Naive thymus-derived CD4-positive, alpha-beta T cell (primary cell): ENCODE measurements at regions of chr3 and their contacts with region 1.

Region 1: GRCh38 chr3:141738022-141738890 is at the start of gene RNF7:
- DNase-seq: peak; percentile 95 to 98 (median 98)
- ATAC-seq: peak; percentile 96
- H3K4me3 ChIP-seq: peak within 1 kb of the TSS; percentile 94
- H3K4me3 Mint-ChIP-seq: peak within 1 kb of the TSS; percentile 92 to 100 (median 98)
- H3K27ac ChIP-seq: peak within 1 kb of the TSS; percentile 95
- H3K27ac Mint-ChIP-seq: peak within 1 kb of the TSS; percentile 92 to 99 (median 98)
- H3K4me1 ChIP-seq: peaks cover 20 to 25% of the 10 kb centered on the region in 2 donors
- H3K4me1 Mint-ChIP-seq: peaks cover 21 to 47% (median 44%) of the 10 kb centered on the region in 7 donors
- H3K27me3 ChIP-seq: no peaks in the 10 kb centered on the region
- H3K27me3 Mint-ChIP-seq: peaks cover 0 to 5% (median 0%) of the 10 kb centered on the region in 5 donors
- total RNA-seq, gene RNF7: 45.6 to 63.2 (median 57.3) TPM

Region 2: DNA sequence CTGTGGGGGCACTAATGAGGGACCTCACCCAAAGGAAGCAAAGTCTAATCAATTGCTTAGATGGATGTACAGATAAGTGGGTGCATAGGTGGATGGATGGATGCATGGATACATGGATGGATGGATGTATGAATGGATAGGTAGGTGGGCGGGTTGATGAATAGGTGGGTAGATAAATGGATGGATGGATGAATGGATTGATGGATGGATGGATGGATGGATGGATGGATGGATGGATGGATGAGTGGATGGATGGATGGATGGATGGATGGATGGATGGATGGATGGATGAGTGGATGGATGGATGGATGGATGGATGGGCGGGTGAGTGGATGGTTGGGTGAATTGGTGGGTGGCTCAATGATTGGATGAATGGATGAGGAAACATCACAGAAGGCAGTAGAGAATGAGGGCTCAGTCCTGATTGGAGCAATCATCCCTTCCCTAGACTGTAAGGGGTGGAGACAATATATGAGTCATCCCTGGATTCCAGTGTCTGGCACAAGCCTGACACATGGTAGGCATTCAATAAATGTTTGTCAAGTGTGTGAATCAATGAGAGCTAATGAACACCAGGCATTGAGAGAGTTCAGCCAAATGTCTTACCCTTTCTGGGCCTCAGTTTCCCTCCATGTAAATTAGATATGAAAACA is 547.0 kb before region 1 on chr3:
- CTCF ChIA-PET with region 1: no interaction called
- POLR2A ChIA-PET with region 1: no interaction called
- intact Hi-C with region 1: no loop called
- DNase-seq: no peak
- ATAC-seq: no peak
- H3K4me3 ChIP-seq: no peak overlapping the region
- H3K4me3 Mint-ChIP-seq: no peak overlapping the region
- H3K27ac ChIP-seq: no peak overlapping the region
- H3K27ac Mint-ChIP-seq: peak overlapping the region in 2 of 9 donors; percentile 4
- H3K4me1 ChIP-seq: no peaks in the 10 kb centered on the region
- H3K4me1 Mint-ChIP-seq: peaks cover 0 to 15% (median 13%) of the 10 kb centered on the region in 7 donors
- H3K27me3 ChIP-seq: peaks cover 0 to 5% of the 10 kb centered on the region in 2 donors
- H3K27me3 Mint-ChIP-seq: peaks cover 0 to 12% (median 6%) of the 10 kb centered on the region in 5 donors

Region 3: GRCh38 chr3:141237701-141238521 is 500.3 kb before region 1 on chr3:
- CTCF ChIA-PET with region 1: no interaction called
- POLR2A ChIA-PET with region 1: no interaction called
- intact Hi-C with region 1: no loop called
- DNase-seq: peak in 5 of 9 donors; percentile 18 to 27 (median 25)
- ATAC-seq: peak; percentile 30
- H3K4me3 ChIP-seq: peak overlapping the region; percentile 4
- H3K4me3 Mint-ChIP-seq: peak overlapping the region; percentile 57 to 92 (median 72)
- H3K27ac ChIP-seq: peak overlapping the region; percentile 66
- H3K27ac Mint-ChIP-seq: peak overlapping the region; percentile 70 to 93 (median 90)
- H3K4me1 ChIP-seq: peaks cover 9 to 63% of the 10 kb centered on the region in 2 donors
- H3K4me1 Mint-ChIP-seq: peaks cover 57 to 100% (median 93%) of the 10 kb centered on the region in 7 donors
- H3K27me3 ChIP-seq: no peaks in the 10 kb centered on the region
- H3K27me3 Mint-ChIP-seq: no peaks in the 10 kb centered on the region

Region 4: DNA sequence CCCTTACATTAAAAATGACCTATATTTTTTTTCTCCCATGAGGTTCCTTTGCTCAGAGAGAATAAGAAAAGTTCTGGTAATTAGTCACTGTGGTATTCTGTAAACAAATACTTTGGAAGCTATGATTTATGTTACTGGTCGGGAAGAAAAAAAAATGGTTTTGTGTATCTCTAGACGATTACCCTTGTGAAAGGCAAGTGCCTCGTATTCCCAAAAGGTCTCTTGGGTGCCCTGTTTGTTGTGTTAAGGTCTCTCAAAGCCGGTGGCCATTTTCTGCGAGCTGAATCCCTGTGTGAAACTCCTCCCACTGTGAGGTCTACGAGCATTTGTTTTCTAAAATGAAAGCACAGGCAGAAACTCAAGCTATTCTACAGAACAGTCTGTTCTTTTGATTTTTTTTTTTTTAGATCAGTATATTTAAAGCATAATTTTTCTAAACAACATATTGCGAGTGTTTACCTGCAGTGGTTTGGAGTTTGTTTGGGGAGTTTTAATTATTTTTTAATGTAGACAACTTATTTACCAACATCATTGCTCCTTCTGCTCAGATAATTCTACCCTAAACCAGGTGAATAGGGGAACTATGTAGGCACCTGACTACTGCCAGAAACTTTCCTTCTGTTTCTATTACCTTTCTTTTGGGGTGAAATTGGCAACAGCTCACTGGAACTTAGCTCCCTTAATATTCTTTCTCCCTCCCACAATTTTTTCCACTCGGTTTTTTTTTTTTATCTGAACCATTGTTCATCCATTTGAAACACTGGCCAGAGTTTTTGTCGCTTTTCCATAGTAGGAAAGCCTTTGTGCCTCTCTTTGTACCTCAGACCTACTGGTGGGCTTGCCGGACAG is 325.9 kb before region 1 on chr3:
- CTCF ChIA-PET with region 1: no interaction called
- POLR2A ChIA-PET with region 1: no interaction called
- intact Hi-C with region 1: loop called in 1 of 2 experiments (anchors 2 kb)
- DNase-seq: peak in 7 of 9 donors; percentile 54 to 76 (median 69)
- ATAC-seq: peak; percentile 78
- H3K4me3 ChIP-seq: peak overlapping the region; percentile 26
- H3K4me3 Mint-ChIP-seq: peak overlapping the region; percentile 62 to 91 (median 86)
- H3K27ac ChIP-seq: peak overlapping the region; percentile 83
- H3K27ac Mint-ChIP-seq: peak overlapping the region; percentile 96 to 100 (median 99)
- H3K4me1 ChIP-seq: peaks cover 59 to 74% of the 10 kb centered on the region in 2 donors
- H3K4me1 Mint-ChIP-seq: peaks cover 52 to 87% (median 74%) of the 10 kb centered on the region in 7 donors
- H3K27me3 ChIP-seq: no peaks in the 10 kb centered on the region
- H3K27me3 Mint-ChIP-seq: no peaks in the 10 kb centered on the region

Region 5: DNA sequence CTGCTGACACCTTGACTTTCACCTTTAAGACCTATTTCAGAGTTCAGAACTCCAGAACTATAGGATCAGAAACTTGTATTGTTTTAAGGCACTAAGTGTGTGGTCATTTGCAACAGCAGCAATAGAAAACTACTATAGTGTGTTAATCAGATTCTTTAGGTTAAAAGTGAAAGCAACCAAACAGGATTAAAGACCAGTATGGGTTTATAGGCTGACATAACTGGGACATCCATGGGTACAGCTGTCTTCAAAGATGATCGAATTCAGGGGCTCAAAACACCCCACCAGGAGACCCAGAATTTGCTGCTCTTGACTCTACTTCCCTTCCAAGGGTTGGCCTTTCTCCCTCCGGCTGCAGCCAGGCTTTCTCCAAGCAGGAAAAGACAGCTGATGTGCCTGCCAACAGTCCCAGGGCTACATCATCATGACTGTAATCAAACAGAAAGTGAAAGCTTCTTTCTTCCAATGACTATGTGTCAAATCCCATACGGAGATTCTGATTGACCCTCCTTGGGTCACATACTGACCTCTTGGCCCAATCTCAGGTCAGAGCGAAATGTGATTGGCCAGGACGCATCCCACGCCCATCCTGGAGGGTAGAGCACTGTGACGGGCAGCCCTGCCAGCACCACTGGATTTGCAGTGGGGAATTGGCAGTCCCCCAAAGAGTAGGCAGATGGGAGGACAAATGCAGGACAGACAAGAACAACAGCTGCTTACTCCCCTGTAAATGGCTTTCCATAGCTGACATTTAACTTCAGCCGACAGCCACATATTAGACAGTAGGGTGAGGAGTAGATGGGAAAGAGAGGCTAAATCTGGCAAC is 51.6 kb before region 1 on chr3:
- CTCF ChIA-PET with region 1: no interaction called
- POLR2A ChIA-PET with region 1: no interaction called
- intact Hi-C with region 1: loop called in 1 of 2 experiments (anchors 5 kb)
- DNase-seq: peak in 4 of 9 donors; percentile 9 to 24 (median 16)
- ATAC-seq: peak; percentile 71
- H3K4me3 ChIP-seq: peak overlapping the region; percentile 49
- H3K4me3 Mint-ChIP-seq: peak overlapping the region; percentile 71 to 93 (median 88)
- H3K27ac ChIP-seq: no peak overlapping the region
- H3K27ac Mint-ChIP-seq: peak overlapping the region; percentile 82 to 95 (median 87)
- H3K4me1 ChIP-seq: peaks cover 0 to 3% of the 10 kb centered on the region in 2 donors
- H3K4me1 Mint-ChIP-seq: peaks cover 6 to 29% (median 22%) of the 10 kb centered on the region in 7 donors
- H3K27me3 ChIP-seq: no peaks in the 10 kb centered on the region
- H3K27me3 Mint-ChIP-seq: no peaks in the 10 kb centered on the region

Region 6: DNA sequence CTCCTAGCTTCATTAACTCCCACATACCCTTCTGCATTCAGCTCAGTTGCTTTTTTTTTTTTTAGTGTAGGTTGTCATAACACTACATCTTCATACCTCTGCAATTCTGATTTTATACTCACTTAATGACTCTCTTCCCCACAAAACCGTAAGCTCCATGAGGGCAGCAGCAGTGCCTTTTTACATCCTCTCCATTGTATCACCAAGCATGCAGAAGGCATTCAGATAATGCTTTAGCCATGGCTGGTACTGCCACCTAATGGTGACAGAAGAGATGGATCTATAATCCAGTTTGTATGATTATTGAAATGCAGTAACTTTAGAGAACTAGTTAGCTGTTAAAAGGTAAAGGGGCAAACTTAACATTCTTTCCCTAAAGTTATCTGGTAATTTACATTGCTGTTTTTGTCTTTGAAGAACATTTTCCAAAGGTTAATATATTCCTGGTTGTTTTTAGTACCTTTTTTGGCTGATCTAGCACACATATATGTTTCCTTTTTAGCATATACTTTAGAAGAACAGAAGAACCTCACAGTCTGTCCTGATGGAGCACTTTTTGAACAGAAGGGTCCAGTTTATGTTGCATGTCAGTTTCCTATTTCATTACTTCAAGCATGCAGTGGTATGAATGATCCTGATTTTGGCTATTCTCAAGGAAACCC is 175.0 kb after region 1 on chr3:
- CTCF ChIA-PET with region 1: interaction called, 14 read pairs
- POLR2A ChIA-PET with region 1: interaction called, 9 read pairs
- intact Hi-C with region 1: loop called (anchors 1 kb)
- DNase-seq: peak in 7 of 9 donors; percentile 40 to 72 (median 60)
- ATAC-seq: peak; percentile 93
- H3K4me3 ChIP-seq: no peak overlapping the region
- H3K4me3 Mint-ChIP-seq: no peak overlapping the region
- H3K27ac ChIP-seq: no peak overlapping the region
- H3K27ac Mint-ChIP-seq: peak overlapping the region in 2 of 9 donors; percentile 11 to 18
- H3K4me1 ChIP-seq: no peaks in the 10 kb centered on the region
- H3K4me1 Mint-ChIP-seq: peaks cover 0 to 5% (median 3%) of the 10 kb centered on the region in 7 donors
- H3K27me3 ChIP-seq: no peaks in the 10 kb centered on the region
- H3K27me3 Mint-ChIP-seq: no peaks in the 10 kb centered on the region

Region 7: GRCh38 chr3:142226484-142226883 is 488.2 kb after region 1 on chr3:
- CTCF ChIA-PET with region 1: no interaction called
- POLR2A ChIA-PET with region 1: no interaction called
- intact Hi-C with region 1: loop called (anchors 1 to 2 kb)
- DNase-seq: no peak
- ATAC-seq: no peak
- H3K4me3 ChIP-seq: no peak overlapping the region
- H3K4me3 Mint-ChIP-seq: peak overlapping the region; percentile 62 to 94 (median 82)
- H3K27ac ChIP-seq: no peak overlapping the region
- H3K27ac Mint-ChIP-seq: peak overlapping the region in 3 of 9 donors; percentile 18 to 45 (median 33)
- H3K4me1 ChIP-seq: no peaks in the 10 kb centered on the region
- H3K4me1 Mint-ChIP-seq: peaks cover 0 to 21% (median 16%) of the 10 kb centered on the region in 7 donors
- H3K27me3 ChIP-seq: no peaks in the 10 kb centered on the region
- H3K27me3 Mint-ChIP-seq: no peaks in the 10 kb centered on the region

Region 8: GRCh38 chr3:142723968-142724681 is 985.9 kb after region 1 on chr3 and contains the start of gene TRPC1:
- CTCF ChIA-PET with region 1: no interaction called
- POLR2A ChIA-PET with region 1: no interaction called
- intact Hi-C with region 1: loop called in 1 of 2 experiments (anchors 2 kb)
- DNase-seq: peak in 8 of 9 donors; percentile 58 to 83 (median 78)
- ATAC-seq: peak; percentile 97
- H3K4me3 ChIP-seq: peak within 1 kb of the TSS; percentile 76
- H3K4me3 Mint-ChIP-seq: peak within 1 kb of the TSS; percentile 80 to 92 (median 88)
- H3K27ac ChIP-seq: peak within 1 kb of the TSS; percentile 76
- H3K27ac Mint-ChIP-seq: peak within 1 kb of the TSS; percentile 31 to 94 (median 88)
- H3K4me1 ChIP-seq: peaks cover 0 to 4% of the 10 kb centered on the region in 2 donors
- H3K4me1 Mint-ChIP-seq: peaks cover 5 to 20% (median 11%) of the 10 kb centered on the region in 7 donors
- H3K27me3 ChIP-seq: peaks cover 0 to 2% of the 10 kb centered on the region in 2 donors
- H3K27me3 Mint-ChIP-seq: peaks cover 20 to 67% (median 22%) of the 10 kb centered on the region in 5 donors
- total RNA-seq, gene TRPC1: 1.5 to 7.6 (median 5.3) TPM